ENCODE measurements at regions of chr6 and their contacts with region 1.

Region 1: DNA sequence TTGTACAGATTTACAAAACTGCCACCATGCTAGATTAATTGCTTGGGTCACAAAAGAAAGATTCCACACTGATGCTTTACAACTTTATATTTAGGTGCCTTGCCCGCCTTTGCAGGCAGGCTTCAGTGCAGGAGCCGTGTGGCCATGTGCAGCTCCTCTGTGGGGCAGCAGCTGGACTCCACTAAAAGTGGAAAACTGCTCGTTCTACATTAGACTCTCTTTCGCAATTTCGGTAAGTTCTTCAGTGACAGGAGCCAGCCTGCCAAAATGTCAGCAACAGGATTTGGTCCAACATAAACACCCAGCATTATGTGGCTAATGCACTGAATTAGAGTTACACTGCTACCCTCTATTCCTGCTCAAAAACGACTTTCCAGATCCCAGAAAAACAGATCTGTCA is 174.4 kb upstream of the KCNK16 start:
- DNase-seq: no peak
- H3K4me3 ChIP-seq: no peak overlapping the region
- H3K27ac ChIP-seq: peak overlapping the region; percentile 51 to 62 (median 55)
- H3K4me1 ChIP-seq: peaks cover 14 to 65% (median 58%) of the 10 kb centered on the region in 4 donors
- H3K27me3 ChIP-seq: no peaks in the 10 kb centered on the region
- CTCF ChIP-seq: peak; percentile 12 to 38 (median 16)
- EP300 ChIP-seq: no peak
- POLR2A ChIP-seq: no peak

Region 2: GRCh38 chr6:39791850-39792539 is 295.1 kb after region 1 on chr6 and contains the start of gene DAAM2:
- intact Hi-C with region 1: loop called (anchors 10 kb)
- DNase-seq: peak; percentile 87
- H3K4me3 ChIP-seq: peak within 1 kb of the TSS; percentile 83 to 87 (median 86)
- H3K27ac ChIP-seq: peak within 1 kb of the TSS; percentile 94 to 98 (median 96)
- H3K4me1 ChIP-seq: peaks cover 13 to 53% (median 48%) of the 10 kb centered on the region in 4 donors
- H3K27me3 ChIP-seq: no peaks in the 10 kb centered on the region
- CTCF ChIP-seq: peak in 1 of 3 experiments; percentile 21
- EP300 ChIP-seq: no peak
- POLR2A ChIP-seq: peak; percentile 24
- total RNA-seq, gene DAAM2: 221 to 446 (median 392) TPM